ENCODE measurements at regions of chr7 and their contacts with region 1.

Region 1: DNA sequence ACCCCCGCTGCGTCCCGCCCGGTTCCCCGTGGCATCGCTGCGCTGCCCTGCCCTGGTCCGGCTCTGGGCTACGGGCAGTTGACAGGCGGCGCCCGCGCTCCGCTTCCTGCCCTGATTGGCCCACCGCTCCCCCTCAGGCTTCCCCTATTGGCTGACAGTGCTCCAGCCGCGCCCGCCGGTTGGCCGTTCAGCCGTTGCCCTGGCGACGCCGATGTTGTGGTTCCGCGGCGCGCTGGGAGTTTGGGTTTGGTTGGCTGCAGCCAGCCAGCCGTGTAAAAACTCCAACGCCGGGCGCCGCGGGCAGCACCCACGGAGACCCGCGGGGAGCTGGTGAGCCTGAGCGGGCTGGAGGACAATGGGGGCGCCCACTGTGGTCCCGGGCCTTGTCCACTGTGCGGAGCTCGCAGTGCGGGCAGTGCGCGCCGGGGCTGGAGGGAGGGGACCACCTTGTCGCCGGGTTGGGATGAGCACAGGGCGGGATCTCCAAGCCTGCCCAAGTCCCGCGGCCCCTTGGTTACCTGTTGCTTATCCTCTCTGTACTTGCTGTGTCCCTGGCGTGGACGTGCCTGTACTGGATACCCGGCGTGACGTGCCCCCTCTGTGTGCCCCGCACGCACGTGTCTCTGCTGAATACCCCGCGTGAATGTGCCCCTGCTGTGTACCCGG is at the start of gene C7orf57:
- DNase-seq: peak; percentile 95 to 97 (median 97)
- ATAC-seq: peak; percentile 100
- H3K4me3 ChIP-seq: peak within 1 kb of the TSS; percentile 44
- H3K27ac ChIP-seq: no peak within 1 kb of the TSS
- H3K4me1 ChIP-seq: no peaks in the 10 kb centered on the region
- H3K27me3 ChIP-seq: no peaks in the 10 kb centered on the region
- total RNA-seq, gene C7orf57: not detected

Region 2: GRCh38 chr7:47852330-47853245 is 182.8 kb before region 1 on chr7:
- intact Hi-C with region 1: no loop called
- DNase-seq: no peak
- ATAC-seq: peak in 1 of 2 donors; percentile 22
- H3K4me3 ChIP-seq: no peak overlapping the region
- H3K27ac ChIP-seq: no peak overlapping the region
- H3K4me1 ChIP-seq: no peaks in the 10 kb centered on the region
- H3K27me3 ChIP-seq: no peaks in the 10 kb centered on the region

Region 3: DNA sequence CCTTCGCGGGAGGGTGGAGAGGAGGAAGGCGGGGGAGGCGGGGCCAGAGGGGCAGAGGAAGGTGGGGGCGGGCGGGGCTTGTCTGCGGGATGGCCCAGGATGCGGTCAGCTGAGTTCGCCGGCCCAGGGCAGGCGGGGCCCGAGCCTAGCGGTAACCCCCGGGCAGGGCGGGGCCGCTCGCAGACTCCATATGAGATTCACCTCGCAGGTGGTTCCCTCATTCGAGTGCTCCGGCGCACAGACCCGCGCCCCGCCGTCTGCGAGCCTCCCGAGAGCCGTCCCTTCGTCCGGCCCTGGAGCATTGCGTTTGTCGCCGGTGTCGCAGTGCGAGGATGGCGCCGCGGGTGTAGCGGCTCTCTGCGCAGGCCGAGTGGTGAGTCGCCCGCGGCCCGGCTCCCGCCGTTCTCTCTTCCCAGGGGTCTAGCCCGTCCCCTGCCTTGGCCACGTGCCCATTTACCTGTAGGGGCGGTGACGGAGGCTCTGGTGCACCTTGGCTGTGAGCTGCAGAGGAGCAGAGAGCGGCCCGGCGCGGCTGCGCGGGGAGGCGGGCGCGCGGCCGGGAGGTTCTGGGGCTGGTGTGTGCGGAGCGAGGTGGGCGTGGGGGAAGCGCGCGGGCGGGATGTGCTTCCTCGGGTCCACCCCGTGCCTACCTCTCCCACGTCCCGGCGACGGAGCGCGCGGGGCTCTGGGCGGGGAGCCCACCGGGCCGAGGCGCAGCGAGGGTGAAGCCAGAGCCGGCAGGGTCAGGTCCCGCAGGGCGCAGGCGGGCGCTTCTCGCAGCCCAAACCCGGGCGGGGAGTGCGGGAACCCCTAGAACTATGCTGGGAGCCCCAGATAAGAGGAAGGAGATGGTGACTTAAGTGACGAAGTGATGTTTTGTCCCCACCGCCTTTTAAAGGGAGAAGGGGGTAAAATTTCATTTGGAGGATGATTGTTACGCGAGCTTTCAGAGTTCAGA is 53.9 kb after region 1 on chr7 and contains the start of gene UPP1:
- intact Hi-C with region 1: loop called in 1 of 4 experiments (anchors 10 kb)
- DNase-seq: peak; percentile 92 to 97 (median 96)
- ATAC-seq: peak; percentile 94 to 95
- H3K4me3 ChIP-seq: peak within 1 kb of the TSS; percentile 56
- H3K27ac ChIP-seq: peak within 1 kb of the TSS; percentile 93
- H3K4me1 ChIP-seq: no peaks in the 10 kb centered on the region
- H3K27me3 ChIP-seq: no peaks in the 10 kb centered on the region
- total RNA-seq, gene UPP1: 20.6 to 29.0 (median 23.5) TPM